ENCODE measurements at regions of chr6 and their contacts with region 1.

Region 1: DNA sequence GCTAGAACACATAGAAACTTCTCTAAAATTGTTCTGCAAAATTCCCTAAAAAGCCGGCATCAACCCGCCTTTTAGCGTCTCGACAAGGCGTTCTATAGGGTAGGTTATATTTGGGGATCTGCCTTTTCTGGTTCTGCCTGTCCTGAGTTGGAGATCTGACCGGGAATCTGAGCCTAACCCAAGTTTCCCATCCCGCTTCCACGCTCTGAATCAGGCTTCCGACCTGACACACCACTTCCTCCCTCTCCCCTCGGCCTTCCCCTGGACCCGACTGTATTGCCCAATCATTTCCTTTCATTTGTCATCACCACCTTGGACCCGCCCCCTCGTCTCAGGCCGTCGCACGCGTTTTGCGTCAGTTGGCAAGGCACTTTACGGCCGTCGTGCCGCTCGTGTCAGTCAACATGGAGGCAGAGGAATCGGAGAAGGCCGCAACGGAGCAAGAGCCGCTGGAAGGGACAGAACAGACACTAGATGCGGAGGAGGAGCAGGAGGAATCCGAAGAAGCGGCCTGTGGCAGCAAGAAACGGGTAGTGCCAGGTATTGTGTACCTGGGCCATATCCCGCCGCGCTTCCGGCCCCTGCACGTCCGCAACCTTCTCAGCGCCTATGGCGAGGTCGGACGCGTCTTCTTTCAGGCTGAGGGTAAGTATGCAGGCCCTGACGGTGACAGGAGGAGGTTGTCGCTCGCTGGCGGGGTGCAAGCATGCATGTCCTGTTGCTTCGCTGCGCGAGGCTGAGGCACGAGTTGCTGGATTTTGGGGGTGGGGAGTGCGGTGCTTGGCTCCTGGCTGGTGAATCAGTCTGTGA is at the start of gene ABT1:
- DNase-seq: peak; percentile 96 to 98
- ATAC-seq: peak; percentile 98 to 99
- H3K4me3 ChIP-seq: peak within 1 kb of the TSS; percentile 82 to 97 (median 90)
- H3K27ac ChIP-seq: peak within 1 kb of the TSS; percentile 86 to 93 (median 90)
- H3K4me1 ChIP-seq: peaks cover 11 to 19% of the 10 kb centered on the region in 2 donors
- H3K27me3 ChIP-seq: peaks cover 21 to 27% (median 23%) of the 10 kb centered on the region in 3 donors
- CTCF ChIP-seq: peak in 1 of 5 experiments; percentile 31
- POLR2A ChIP-seq: peak; percentile 58 to 66
- total RNA-seq, gene ABT1: 7.1 to 13.2 (median 9.5) TPM

Region 2: DNA sequence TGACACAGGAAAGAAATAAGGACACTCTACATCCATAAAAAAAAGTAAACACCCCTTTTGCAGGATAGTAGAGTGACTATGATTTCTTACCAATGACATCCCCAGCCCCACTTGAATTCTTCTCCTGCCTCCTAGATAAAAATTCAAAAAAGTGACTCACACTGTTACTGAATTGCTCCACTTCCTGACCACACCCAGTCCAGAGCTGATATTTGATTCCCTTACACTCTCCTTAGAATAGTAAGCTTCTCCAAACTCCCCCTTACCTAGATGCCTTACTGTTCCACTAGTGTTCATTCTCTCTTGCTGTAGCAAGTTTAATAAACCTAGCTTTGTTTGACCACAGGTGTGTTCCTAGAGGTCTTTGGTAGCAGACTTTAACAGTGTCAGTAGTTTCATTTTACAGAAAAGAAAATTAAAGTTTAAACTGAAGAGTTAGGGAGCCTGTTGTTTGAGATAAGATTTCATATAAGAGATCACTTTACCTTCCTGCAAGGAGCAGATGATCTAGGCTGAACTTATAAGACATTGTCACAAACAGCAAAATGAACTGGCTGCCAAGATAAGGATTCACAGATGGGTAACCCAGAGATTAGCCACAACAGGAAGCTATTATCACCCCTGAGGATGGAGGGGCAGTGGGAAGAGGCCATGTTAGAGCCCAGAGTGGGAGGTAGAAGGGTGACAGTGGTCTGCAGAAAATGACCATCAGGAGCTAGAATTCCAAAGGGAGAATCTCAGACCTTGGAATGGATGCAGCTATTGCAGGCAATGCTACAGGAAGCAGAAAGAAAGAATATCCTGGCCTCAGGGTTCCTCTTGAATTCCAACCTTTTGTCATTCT is 260.2 kb before region 1 on chr6:
- in situ Hi-C with region 1: loop called in 3 of 4 experiments (anchors 5 to 10 kb)
- intact Hi-C with region 1: loop called (anchors 1 kb)
- DNase-seq: no peak
- ATAC-seq: no peak
- H3K4me3 ChIP-seq: no peak overlapping the region
- H3K27ac ChIP-seq: no peak overlapping the region
- H3K4me1 ChIP-seq: no peaks in the 10 kb centered on the region
- H3K27me3 ChIP-seq: peaks cover 25 to 26% (median 26%) of the 10 kb centered on the region in 3 donors
- CTCF ChIP-seq: no peak
- POLR2A ChIP-seq: no peak

Region 3: GRCh38 chr6:26473758-26474438 is 122.9 kb before region 1 on chr6:
- in situ Hi-C with region 1: no loop called
- intact Hi-C with region 1: loop called (anchors 5 kb)
- DNase-seq: peak; percentile 41 to 62
- ATAC-seq: peak; percentile 97 to 98
- H3K4me3 ChIP-seq: peak overlapping the region; percentile 57 to 64 (median 58)
- H3K27ac ChIP-seq: peak overlapping the region; percentile 75 to 80 (median 78)
- H3K4me1 ChIP-seq: no peaks in the 10 kb centered on the region
- H3K27me3 ChIP-seq: no peaks in the 10 kb centered on the region
- CTCF ChIP-seq: no peak
- POLR2A ChIP-seq: peak; percentile 54 to 79

Region 4: DNA sequence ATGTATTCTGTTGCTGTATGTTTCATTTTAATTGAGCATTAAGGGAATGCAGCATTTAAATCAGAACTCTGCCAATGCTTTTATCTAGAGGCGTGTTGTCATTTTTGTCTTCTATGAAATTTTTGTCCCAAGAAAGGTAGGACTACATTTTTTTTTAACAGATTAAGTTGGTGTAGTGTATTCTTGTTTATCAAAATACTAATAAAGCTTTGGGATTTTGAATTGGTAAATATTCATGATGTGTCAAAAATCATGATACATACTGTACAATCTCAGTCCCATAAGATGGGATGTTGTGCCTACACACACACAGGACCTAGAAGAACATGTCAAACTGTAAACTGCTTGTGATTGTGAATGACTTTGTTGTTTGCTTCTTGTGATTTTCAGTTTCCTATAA is 69.9 kb before region 1 on chr6:
- in situ Hi-C with region 1: no loop called
- intact Hi-C with region 1: no loop called
- DNase-seq: no peak
- ATAC-seq: no peak
- H3K4me3 ChIP-seq: no peak overlapping the region
- H3K27ac ChIP-seq: no peak overlapping the region
- H3K4me1 ChIP-seq: peaks cover 12 to 24% of the 10 kb centered on the region in 2 donors
- H3K27me3 ChIP-seq: no peaks in the 10 kb centered on the region
- CTCF ChIP-seq: no peak
- POLR2A ChIP-seq: no peak

Region 5: DNA sequence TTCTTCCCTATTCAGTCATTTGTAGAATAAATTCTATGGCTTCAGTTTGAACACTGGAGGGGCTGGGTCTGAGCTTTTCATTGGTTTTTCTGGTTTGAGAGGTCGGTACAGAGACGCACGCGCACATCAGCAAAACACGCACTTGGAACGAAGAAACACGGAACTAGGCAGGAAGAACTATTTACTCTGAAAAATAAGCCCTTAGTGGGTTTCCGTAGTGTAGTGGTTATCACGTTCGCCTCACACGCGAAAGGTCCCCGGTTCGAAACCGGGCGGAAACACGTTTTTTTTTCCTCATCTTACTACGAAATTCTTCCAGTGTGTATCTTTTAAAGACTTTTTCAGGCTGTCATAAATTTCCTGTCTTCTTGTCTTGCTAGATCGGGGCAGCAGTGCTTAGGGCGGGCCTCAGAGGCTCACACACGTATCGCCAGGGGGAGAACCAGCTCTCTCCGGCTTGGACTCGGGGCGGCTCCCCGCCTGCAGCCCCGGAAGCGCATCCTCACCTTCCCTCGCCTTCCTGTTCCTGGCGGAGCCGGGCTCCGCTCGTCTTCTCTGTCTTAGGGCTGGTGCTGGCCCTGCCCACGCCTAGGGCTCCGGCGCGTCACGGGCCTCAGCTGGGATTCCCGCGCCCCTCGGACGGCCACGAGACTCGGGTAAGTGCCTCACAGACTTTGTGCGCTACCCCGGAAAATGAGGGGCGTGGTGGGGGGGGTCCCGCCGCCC is 58.8 kb before region 1 on chr6 and contains the start of gene HMGN4:
- in situ Hi-C with region 1: no loop called
- intact Hi-C with region 1: loop called (anchors 1 kb)
- DNase-seq: peak; percentile 58 to 72
- ATAC-seq: peak; percentile 68 to 85
- H3K4me3 ChIP-seq: peak within 1 kb of the TSS; percentile 75 to 89 (median 89)
- H3K27ac ChIP-seq: peak within 1 kb of the TSS; percentile 89 to 95 (median 92)
- H3K4me1 ChIP-seq: peaks cover 39 to 41% of the 10 kb centered on the region in 2 donors
- H3K27me3 ChIP-seq: no peaks in the 10 kb centered on the region
- CTCF ChIP-seq: no peak
- POLR2A ChIP-seq: peak; percentile 47 to 62
- total RNA-seq, gene HMGN4: 20.1 to 58.7 (median 28.4) TPM

Region 6: DNA sequence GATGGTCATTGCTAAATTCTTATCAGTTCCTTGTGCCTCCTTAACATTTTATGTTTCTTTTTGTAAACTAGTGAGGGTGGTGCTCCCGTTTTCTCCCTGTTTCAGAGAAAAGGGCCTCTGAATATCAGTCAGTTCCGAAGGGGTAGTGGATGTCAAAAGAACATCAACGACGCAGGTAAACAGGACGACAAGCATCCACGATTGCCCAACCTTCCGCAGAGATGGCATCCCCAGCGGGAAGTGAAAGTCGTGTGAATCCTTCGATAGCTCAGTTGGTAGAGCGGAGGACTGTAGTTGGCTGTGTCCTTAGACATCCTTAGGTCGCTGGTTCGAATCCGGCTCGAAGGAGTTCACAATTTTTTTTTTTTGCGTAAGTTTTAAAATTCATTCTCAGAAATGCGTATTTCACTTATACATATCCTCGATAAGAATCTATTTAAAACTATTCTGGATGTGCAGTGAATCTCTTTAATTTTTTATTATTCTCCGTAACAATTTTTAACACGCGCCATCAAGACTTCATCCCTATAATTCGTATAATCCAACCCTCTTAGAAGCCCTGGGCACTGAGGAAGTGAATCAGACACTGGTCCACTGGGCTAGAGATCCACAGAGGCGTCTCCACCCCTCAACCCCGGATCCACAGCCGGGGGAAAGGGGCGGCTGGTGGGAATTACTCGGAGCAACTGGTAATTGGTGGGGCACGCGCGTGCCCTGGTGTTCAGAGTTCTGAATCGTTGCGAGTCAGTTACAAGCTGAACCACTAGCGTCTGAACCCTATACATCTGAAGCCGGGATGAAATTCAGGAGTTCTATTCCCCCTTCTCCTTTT is 28.0 kb before region 1 on chr6:
- in situ Hi-C with region 1: no loop called
- intact Hi-C with region 1: loop called (anchors 1 kb)
- DNase-seq: peak; percentile 74 to 88
- ATAC-seq: peak; percentile 89 to 91
- H3K4me3 ChIP-seq: peak overlapping the region; percentile 37 to 59 (median 50)
- H3K27ac ChIP-seq: peak overlapping the region; percentile 19 to 54 (median 43)
- H3K4me1 ChIP-seq: peaks cover 2 to 7% of the 10 kb centered on the region in 2 donors
- H3K27me3 ChIP-seq: no peaks in the 10 kb centered on the region
- CTCF ChIP-seq: no peak
- POLR2A ChIP-seq: no peak

Measured in gastrocnemius medialis (tissue), 4 donors.